ENCODE measurements at regions of chr19 and their contacts with region 1.

Region 1: GRCh38 chr19:56066152-56067023 is 54.7 kb downstream of the ZNF787 start:
- DNase-seq: peak; percentile 58 to 78
- ATAC-seq: peak; percentile 83 to 94
- H3K4me3 ChIP-seq: no peak overlapping the region; the same call in 2 of the 3 replicates
- H3K27ac ChIP-seq: no peak overlapping the region
- H3K4me1 ChIP-seq: no peaks in the 10 kb centered on the region
- CTCF ChIP-seq: peak; percentile 80
- EP300 ChIP-seq: no peak
- POLR2A ChIP-seq: no peak
- RAD21 ChIP-seq: peak; percentile 81 to 85

Region 2: GRCh38 chr19:56053596-56053995 is 12.8 kb before region 1 on chr19:
- CTCF ChIA-PET with region 1: interaction called, 14 read pairs
- POLR2A ChIA-PET with region 1: no interaction called
- DNase-seq: no peak
- ATAC-seq: no peak
- H3K4me3 ChIP-seq: no peak overlapping the region
- H3K27ac ChIP-seq: no peak overlapping the region
- H3K4me1 ChIP-seq: no peaks in the 10 kb centered on the region
- CTCF ChIP-seq: no peak
- EP300 ChIP-seq: no peak
- POLR2A ChIP-seq: no peak
- RAD21 ChIP-seq: no peak

Region 3: DNA sequence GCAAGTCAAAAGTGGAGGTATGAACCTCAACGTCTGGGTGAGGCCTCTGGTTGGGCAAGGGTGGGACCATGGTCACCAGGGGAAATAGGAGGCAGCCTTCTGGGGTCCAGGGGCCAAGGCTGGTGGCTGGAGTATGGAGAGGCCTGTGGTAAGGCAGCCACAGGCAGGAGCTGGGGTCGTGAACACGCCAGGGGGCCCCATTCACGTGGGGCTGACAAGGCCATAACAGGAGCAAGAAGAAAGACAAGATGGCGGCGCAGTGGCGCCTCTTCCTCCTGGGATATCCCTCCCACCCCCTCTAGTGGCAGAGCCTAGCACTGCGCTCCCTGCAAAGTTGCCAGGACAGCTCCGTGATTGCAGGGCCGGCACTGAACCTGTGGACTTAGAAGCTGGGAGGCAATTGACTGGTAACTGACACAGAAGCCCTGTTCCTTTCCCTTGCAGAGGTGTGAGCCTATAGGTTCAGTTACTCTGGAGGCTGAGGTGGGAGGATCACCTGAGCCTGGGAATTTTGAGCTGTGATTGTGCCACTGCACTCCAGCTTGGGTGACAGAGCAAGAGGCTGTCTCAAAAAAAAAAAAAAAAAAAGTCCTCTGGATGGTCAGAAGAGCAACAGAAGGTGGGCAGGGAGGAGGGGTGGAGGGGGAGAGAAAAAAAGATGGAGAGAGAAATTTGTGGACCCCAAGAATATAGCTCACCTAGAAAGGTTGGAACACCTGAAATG is 186.5 kb after region 1 on chr19:
- CTCF ChIA-PET with region 1: interaction called, 10 read pairs
- POLR2A ChIA-PET with region 1: no interaction called
- DNase-seq: peak; percentile 68 to 87
- ATAC-seq: peak; percentile 83 to 96; a peak in 5 of 6 replicates
- H3K4me3 ChIP-seq: no peak overlapping the region
- H3K27ac ChIP-seq: no peak overlapping the region
- H3K4me1 ChIP-seq: no peaks in the 10 kb centered on the region
- CTCF ChIP-seq: peak; percentile 35; the same call in 2 of the 3 replicates
- EP300 ChIP-seq: no peak
- POLR2A ChIP-seq: no peak
- RAD21 ChIP-seq: peak; percentile 20 to 67; a peak in 3 of 5 replicates